Panc1 (cell line): ENCODE measurements at regions of chr2 and their contacts with region 1.

Region 1: GRCh38 chr2:171025214-171025613 is 96.2 kb downstream of the GORASP2 start:
- DNase-seq: no peak
- ATAC-seq: no peak
- H3K4me3 ChIP-seq: no peak overlapping the region
- H3K27ac ChIP-seq: no peak overlapping the region
- H3K4me1 ChIP-seq: no peaks in the 10 kb centered on the region
- H3K27me3 ChIP-seq: no peaks in the 10 kb centered on the region
- CTCF ChIP-seq: no peak

Region 2: DNA sequence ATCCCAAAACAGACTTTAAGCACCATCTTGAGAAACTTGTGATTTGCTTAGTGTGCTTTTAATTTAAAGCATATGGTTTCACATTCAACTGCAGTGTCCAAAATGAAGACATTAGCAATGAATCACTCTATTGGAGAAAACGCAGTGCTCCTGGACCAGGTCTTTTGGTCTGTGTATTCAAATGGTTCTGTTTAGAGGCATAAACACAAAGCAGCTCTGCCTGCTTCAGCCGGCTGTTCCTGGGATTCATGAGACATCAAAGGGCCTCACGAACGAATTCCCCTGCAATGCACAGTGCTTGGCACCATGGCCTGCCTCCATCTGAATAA is 427.2 kb before region 1 on chr2:
- CTCF ChIA-PET with region 1: no interaction called
- POLR2A ChIA-PET with region 1: no interaction called
- in situ Hi-C with region 1: no loop called
- intact Hi-C with region 1: no loop called
- DNase-seq: no peak
- ATAC-seq: no peak
- H3K4me3 ChIP-seq: no peak overlapping the region
- H3K27ac ChIP-seq: no peak overlapping the region
- H3K4me1 ChIP-seq: no peaks in the 10 kb centered on the region
- H3K27me3 ChIP-seq: no peaks in the 10 kb centered on the region
- CTCF ChIP-seq: no peak

Region 3: DNA sequence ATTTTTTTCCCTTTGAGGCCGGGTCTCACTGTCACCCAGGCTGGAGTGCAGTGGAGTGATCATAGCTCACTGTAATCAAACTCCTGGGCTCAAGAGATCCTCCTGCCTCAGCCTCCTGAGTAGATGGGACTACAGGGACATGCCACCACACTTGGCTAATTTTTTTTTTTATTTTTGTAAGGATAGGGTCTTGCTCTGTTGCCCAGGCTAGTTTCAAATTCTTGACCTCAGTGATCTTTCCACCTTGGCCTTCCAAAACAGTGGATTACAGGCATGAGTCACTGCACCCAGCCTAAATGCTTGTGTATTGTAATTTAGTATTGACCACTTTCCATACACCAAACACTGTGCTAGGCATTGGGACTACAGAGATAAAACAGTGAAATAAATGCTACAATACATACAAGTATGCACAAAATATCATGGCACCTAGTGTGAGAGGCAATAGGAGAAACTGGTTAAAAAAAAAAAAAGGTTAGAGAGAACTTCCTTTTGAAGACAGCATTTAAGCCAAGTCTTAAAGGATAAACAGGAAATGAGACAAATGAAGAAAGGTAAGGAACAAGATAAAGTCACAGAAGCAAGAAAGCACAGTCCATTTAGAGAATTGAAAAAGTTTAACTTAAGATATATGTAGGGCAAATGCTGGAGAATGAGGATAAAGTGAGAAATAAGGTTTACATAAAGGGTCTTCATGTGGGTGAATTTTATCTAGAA is 17.2 kb after region 1 on chr2:
- CTCF ChIA-PET with region 1: no interaction called
- POLR2A ChIA-PET with region 1: no interaction called
- in situ Hi-C with region 1: no loop called
- intact Hi-C with region 1: no loop called
- DNase-seq: no peak
- ATAC-seq: no peak
- H3K4me3 ChIP-seq: no peak overlapping the region
- H3K27ac ChIP-seq: no peak overlapping the region
- H3K4me1 ChIP-seq: no peaks in the 10 kb centered on the region
- H3K27me3 ChIP-seq: no peaks in the 10 kb centered on the region
- CTCF ChIP-seq: no peak

Region 4: DNA sequence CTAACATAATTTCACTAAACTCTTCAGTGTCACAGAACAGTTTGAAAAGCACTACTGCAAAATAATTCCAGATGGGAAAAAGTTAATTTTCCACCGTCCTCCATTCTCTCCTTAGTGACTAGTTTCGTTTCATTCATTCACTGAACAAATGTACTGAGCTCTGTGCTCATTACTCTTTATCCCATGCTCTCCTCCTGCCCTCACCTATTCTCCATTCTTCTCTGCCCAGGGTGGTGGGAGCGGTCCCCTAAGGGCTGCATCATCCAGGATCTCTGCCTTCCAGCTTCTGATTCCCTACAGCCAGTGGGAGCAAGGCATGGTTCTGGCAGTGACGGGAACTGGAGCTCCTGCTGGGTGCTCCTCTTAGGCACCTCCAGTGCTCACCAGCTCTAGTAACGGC is 269.4 kb after region 1 on chr2:
- CTCF ChIA-PET with region 1: no interaction called
- POLR2A ChIA-PET with region 1: interaction called, 16 read pairs
- in situ Hi-C with region 1: no loop called
- intact Hi-C with region 1: no loop called
- DNase-seq: no peak
- ATAC-seq: no peak
- H3K4me3 ChIP-seq: no peak overlapping the region
- H3K27ac ChIP-seq: no peak overlapping the region
- H3K4me1 ChIP-seq: no peaks in the 10 kb centered on the region
- H3K27me3 ChIP-seq: no peaks in the 10 kb centered on the region
- CTCF ChIP-seq: no peak